Activated CD4-positive, alpha-beta T cell treated with anti-CD3 and anti-CD28 coated beads for 36 hours (primary cell): ENCODE measurements at regions of chrX and their contacts with region 1.

Region 1: DNA sequence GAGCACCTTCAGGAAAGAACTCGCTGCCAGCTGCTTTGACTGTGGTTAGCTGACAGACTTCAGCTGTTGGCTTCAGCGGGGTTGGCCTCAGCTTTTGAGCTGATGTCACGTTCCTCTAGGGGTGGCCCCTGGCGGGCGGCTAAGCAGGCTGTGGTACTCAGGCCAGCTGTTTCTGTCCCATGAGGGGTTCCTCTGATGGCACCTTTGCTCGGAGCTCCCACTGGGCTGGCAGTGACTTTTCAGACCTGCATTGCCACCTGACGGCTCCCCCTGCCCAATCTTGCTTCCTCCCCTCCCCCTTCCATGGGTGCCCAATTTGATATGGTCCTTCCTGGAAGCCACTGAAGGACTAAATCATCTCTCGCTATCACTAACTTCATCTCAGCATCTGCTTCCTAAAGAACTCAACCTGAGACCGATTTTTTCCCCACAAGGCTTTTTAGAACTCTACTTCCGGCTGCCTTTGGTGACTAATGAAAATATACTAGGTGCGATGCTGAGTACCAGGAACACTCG is 519.3 kb downstream of the BCOR start:
- DNase-seq: peak; percentile 83
- ATAC-seq: peak; percentile 91
- H3K4me3 Mint-ChIP-seq: peak overlapping the region; percentile 35
- H3K27ac Mint-ChIP-seq: peak overlapping the region; percentile 84
- H3K4me1 Mint-ChIP-seq: peaks cover 28% of the 10 kb centered on the region
- H3K27me3 Mint-ChIP-seq: no peaks in the 10 kb centered on the region

Region 2: DNA sequence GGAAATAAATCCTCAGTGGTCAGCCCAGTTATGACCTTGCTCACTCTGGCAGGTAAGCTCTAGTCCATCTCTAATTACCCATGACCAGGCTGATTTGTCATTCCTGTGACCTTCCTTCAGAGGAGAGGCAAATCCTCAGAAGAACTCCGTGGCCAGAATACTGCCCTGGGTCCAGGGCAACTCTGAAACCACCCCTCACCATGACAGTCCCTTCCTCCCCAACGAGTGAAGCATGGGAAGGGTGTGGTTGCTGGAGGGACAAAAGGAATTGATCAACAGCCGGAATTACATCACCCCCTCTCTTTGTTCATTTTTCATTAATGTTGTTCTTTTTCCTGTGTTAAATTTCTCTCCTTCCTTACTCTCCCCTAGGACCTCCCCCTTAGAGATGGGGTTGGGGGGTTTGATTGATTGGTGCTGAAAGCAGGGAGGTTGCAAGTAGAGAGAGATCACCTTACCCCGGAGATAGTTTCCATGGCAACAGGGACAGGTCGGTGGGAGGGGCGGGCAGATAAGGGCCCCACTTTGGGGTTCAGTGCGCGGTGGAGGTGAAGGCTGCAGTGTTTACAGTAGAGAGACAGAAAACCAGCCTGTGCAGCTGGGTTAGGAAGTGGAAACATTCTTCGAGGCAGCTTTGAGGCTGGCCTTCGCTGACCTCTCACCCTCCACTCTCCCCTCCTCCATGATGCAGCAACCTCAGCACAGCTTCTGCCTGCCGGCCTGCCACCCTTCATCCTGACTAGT is 128.0 kb before region 1 on chrX:
- CTCF ChIA-PET with region 1: no interaction called
- POLR2A ChIA-PET with region 1: no interaction called
- intact Hi-C with region 1: no loop called
- DNase-seq: peak; percentile 8
- ATAC-seq: no peak
- H3K4me3 Mint-ChIP-seq: no peak overlapping the region
- H3K27ac Mint-ChIP-seq: no peak overlapping the region
- H3K4me1 Mint-ChIP-seq: peaks cover 29% of the 10 kb centered on the region
- H3K27me3 Mint-ChIP-seq: no peaks in the 10 kb centered on the region

Region 3: GRCh38 chrX:39550795-39551361 is 27.5 kb before region 1 on chrX:
- CTCF ChIA-PET with region 1: no interaction called
- POLR2A ChIA-PET with region 1: no interaction called
- intact Hi-C with region 1: loop called in 1 of 2 experiments (anchors 1 kb)
- DNase-seq: peak; percentile 5
- ATAC-seq: peak; percentile 16
- H3K4me3 Mint-ChIP-seq: no peak overlapping the region
- H3K27ac Mint-ChIP-seq: no peak overlapping the region
- H3K4me1 Mint-ChIP-seq: peaks cover 5% of the 10 kb centered on the region
- H3K27me3 Mint-ChIP-seq: no peaks in the 10 kb centered on the region